ENCODE measurements at regions of chr12 and their contacts with region 1.

Region 1: DNA sequence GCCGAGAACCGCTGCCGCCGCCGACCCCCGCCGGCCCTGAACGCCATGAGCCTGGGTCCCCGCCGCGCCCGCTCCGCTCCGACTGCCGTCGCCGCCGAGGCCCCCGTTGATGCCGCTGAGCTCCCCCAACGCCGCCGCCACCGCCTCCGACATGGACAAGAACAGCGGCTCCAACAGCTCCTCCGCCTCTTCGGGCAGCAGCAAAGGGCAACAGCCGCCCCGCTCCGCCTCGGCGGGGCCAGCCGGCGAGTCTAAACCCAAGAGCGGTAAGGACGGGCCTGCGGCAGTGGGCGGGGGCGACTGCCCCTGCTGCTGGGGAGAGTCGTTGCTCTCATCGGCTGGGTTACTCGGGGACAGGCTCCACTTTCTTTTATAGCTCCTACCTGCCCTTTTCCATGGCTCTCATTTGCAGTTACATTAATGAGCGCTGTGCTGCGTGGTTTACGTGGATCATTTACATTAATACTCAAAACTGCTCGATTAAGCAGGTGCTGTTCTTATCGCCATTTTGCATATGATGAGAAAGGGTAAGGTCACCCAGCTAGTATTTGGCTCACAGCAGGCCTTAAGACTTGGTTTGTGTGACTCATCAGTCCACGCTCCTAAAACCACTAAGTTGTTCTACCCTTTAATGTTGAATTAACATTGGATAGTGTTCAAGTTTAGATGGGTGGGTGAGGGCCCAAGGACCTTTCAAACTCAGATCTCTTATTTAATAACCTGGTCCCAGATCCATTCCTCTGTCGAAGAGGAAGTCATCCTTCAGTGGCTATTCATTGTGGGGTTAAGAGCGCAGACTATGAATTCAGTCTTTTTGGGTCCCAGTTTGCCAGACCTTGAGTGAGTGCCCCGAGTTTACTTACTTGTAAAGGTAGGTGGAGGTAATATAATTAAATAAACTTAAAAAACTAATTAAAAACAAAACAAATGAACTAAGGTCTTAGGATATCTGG is 823 bp downstream of the RNF10 start:
- DNase-seq: peak; percentile 59
- ATAC-seq: peak; percentile 32

Region 2: GRCh38 chr12:120495723-120496412 is 39.1 kb before region 1 on chr12 and contains the start of gene DYNLL1:
- intact Hi-C with region 1: loop called (anchors 5 kb)
- DNase-seq: peak; percentile 98
- ATAC-seq: peak; percentile 98
- total RNA-seq, gene DYNLL1: 144 TPM

Region 3: DNA sequence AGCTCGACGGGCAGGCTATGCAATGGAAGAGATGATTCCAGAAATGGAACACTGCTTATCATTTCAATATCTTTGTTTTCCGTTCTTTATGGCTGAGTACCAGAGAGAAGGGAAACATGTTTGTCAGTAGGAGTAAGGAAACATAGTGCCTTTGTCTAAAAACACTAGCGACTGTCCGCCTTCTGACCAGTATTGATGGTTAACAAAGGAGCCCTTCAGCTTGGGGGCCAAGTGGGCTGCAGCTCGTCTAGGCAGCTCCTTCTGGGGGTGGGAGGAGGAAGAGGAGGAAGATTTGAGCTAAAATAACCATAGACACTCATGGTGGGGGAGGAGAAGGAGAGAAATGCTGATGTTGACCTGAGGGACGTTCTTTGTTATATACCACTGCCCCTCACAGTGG is 21.0 kb before region 1 on chr12:
- intact Hi-C with region 1: no loop called
- DNase-seq: no peak
- ATAC-seq: no peak